Left ventricle myocardium superior (tissue), 1 donor: ENCODE measurements at regions of chr15 and their contacts with region 1.

Region 1: DNA sequence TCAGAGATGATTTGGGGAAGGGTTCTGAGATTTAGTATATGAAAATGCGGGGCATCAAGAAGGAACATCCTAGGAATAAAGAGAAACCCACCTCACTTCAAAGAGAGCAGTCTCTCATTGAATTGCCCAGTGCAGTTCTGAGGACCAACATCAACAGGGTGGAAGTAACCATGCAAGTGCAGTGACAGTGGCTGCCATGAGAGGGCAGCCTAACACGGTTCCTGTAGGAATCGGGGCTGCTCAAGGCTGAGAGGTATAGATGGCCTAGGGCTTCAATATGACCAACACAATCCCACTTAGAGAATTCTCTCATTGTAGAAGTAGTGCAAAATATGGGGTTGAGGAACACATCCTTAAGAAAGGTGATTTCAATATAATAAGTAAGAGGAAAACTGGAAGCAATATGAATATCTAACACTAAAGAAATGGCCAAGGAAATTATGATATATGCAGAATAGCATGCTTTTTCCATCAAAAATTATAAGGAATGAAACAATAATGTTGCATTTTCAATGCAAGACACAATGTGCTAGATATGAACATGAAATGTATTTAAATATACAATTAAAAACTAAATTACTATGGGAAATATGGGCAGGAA is 51.1 kb upstream of the ARRDC4 start:
- DNase-seq: peak; percentile 74
- ATAC-seq: peak; percentile 84

Region 2: GRCh38 chr15:98083203-98083910 is 174.0 kb after region 1 on chr15:
- intact Hi-C with region 1: loop called (anchors 5 kb)
- DNase-seq: no peak
- ATAC-seq: no peak

Region 3: DNA sequence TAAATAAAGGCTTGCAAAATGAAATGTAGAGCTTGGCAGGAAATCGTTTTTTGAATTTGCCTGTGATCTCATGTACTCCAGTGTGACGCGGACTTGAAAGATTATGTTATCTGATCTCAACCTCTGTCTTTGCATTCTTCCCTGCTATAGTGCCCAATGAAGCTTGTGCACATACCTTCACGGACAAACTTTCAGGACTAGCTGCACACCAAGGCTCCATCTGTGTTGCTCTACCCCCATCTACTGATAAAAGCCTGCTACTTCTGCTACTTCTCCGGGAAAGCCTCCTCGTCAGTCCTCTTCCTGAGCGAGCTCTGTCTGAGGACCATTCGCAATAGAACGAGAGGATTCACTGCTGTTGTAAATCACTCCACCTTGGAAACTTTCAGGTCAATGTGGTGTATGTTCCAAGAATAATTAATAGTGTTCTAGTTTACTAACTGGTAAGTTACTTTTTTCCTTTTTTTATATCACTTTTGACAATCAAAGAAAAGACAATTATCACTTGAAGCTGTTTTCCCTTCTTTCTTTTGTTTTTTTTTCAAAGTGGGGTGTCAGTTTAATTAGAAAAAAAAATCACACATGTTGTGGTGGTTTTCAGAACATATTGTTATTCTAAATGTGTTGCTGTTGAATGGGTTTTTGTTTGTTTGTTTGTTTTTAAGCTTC is 268.7 kb after region 1 on chr15:
- intact Hi-C with region 1: loop called (anchors 10 kb)
- DNase-seq: no peak
- ATAC-seq: peak; percentile 69